MCF 10A (cell line): ENCODE measurements at regions of chr17 and their contacts with region 1.

Region 1: DNA sequence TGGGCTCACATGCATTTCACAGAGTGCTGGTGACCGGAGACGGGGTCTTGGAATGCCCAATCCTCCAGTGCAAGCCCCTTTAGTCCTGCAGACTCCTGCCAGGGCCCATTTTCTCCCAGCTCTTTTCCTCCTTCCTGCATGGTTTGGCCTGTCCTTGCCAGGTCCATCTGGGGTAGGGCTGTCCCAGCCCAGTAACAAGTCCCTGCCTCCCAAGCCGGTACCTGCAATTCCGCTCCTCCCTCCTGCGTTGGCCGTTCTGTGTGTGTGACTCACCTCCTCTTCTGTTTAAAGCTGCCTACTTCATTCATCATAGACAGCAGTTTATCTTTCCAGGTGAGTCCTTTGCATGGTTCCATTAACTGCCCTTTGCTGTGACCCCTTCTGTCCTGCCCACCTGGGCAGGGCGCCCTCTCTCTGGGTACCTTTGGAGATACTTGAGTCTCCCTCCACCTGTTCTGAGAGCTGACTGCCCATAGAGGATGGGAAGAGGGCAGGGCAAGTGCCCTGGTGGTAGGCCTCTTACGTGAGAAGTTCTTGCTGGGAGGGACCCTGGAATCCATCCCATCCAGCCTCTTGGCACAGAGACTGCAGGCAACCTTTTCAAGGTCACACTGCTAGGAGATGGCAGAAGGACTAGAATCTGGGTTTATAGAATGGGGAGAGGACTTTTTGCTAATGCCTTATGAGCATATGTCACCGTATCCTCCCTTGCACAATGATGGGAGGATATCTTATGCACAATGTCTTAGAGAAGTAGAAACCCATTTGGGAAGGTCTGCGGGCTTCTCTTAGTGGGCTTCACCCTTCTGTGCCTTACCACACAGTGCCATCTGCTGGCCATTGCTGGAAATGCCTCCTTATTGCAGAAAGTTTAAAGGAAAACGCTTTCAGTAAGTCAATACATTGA is 29.7 kb upstream of the LGALS9 start:
- DNase-seq: peak; percentile 79
- H3K4me3 Mint-ChIP-seq: no peak overlapping the region
- H3K27ac Mint-ChIP-seq: no peak overlapping the region
- H3K4me1 Mint-ChIP-seq: peaks cover 21% of the 10 kb centered on the region
- H3K27me3 Mint-ChIP-seq: no peaks in the 10 kb centered on the region
- CTCF ChIP-seq: peak; percentile 93

Region 2: DNA sequence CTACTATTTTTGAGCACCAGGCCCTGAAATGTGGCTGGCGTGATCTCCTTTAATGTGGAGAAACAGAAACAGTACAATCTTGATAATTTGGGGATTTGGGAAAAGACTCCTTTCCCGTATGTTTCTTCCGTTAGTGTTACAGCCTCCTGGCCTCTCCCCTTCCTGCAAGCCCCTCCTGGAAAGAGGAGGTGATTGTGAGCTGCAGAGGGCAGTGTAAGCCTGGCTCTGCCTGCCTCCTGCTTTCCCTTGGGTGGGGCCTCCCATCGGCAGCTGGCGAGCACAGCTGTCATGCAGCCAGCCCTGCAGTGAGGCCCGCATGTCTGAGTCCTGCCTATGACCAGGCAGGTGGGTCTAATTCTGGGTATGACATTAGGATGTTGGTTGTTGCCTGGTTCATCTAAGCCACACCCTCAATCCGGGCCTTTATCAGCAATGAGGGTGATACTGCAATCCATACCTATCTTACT is 356.1 kb before region 1 on chr17:
- CTCF ChIA-PET with region 1: interaction called, 229 read pairs
- POLR2A ChIA-PET with region 1: no interaction called
- intact Hi-C with region 1: loop called (anchors 1 kb)
- DNase-seq: peak; percentile 89
- H3K4me3 Mint-ChIP-seq: peak overlapping the region; percentile 49
- H3K27ac Mint-ChIP-seq: peak overlapping the region; percentile 74
- H3K4me1 Mint-ChIP-seq: peaks cover 48% of the 10 kb centered on the region
- H3K27me3 Mint-ChIP-seq: peaks cover 4% of the 10 kb centered on the region
- CTCF ChIP-seq: peak; percentile 68

Region 3: DNA sequence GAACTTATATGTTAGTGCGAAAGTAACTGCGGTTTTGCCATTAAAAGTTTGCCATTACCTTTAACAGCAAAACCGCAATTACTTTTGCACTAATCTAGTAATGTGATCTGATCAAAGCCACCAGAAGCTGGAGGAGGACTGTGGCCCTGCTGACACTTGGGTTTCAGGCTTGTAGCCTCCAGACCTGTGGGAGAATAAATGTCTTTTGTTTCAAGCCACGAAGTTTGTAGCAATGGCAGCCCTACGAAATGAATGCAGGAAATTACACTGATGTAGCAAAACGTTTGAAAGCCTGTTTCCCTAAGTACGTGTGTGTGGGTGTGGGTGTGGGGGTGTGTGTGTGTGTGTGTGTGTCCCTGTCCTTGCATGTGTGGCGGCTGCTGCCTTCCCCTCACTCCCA is 240.8 kb before region 1 on chr17:
- CTCF ChIA-PET with region 1: interaction called, 102 read pairs
- POLR2A ChIA-PET with region 1: interaction called, 3 read pairs
- intact Hi-C with region 1: no loop called
- DNase-seq: no peak
- H3K4me3 Mint-ChIP-seq: no peak overlapping the region
- H3K27ac Mint-ChIP-seq: no peak overlapping the region
- H3K4me1 Mint-ChIP-seq: no peaks in the 10 kb centered on the region
- H3K27me3 Mint-ChIP-seq: no peaks in the 10 kb centered on the region
- CTCF ChIP-seq: no peak

Region 4: GRCh38 chr17:27430882-27431491 is 170.3 kb before region 1 on chr17:
- CTCF ChIA-PET with region 1: interaction called, 29 read pairs
- POLR2A ChIA-PET with region 1: no interaction called
- intact Hi-C with region 1: loop called (anchors 1 kb)
- DNase-seq: peak; percentile 66
- H3K4me3 Mint-ChIP-seq: no peak overlapping the region
- H3K27ac Mint-ChIP-seq: no peak overlapping the region
- H3K4me1 Mint-ChIP-seq: no peaks in the 10 kb centered on the region
- H3K27me3 Mint-ChIP-seq: no peaks in the 10 kb centered on the region
- CTCF ChIP-seq: peak; percentile 60

Region 5: GRCh38 chr17:27578718-27579085 is 22.6 kb before region 1 on chr17:
- CTCF ChIA-PET with region 1: interaction called, 19 read pairs
- POLR2A ChIA-PET with region 1: no interaction called
- intact Hi-C with region 1: no loop called
- DNase-seq: peak; percentile 69
- H3K4me3 Mint-ChIP-seq: no peak overlapping the region
- H3K27ac Mint-ChIP-seq: no peak overlapping the region
- H3K4me1 Mint-ChIP-seq: peaks cover 41% of the 10 kb centered on the region
- H3K27me3 Mint-ChIP-seq: no peaks in the 10 kb centered on the region
- CTCF ChIP-seq: no peak

Region 6: DNA sequence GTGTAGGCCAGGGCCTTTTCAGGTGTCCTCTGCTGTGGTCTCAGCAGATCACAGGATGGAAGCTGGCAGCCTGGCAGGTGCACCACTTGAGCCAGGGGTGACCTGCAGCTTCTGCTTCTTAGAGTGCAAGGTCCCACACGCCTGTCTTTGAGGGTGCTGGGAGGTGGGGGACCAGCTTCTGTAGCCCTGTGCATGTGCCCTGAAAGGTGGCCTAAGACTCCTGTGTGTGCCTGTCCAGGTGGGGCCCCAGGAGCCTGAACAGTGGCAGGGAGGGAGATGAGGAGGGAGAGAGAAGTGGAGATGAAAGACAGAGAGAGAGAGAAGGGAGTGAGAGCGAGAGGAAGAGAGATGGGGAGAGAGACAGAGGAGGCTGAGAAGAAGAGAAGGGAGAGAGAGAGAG is 75.9 kb after region 1 on chr17:
- CTCF ChIA-PET with region 1: no interaction called
- POLR2A ChIA-PET with region 1: no interaction called
- intact Hi-C with region 1: no loop called
- DNase-seq: no peak
- H3K4me3 Mint-ChIP-seq: no peak overlapping the region
- H3K27ac Mint-ChIP-seq: no peak overlapping the region
- H3K4me1 Mint-ChIP-seq: no peaks in the 10 kb centered on the region
- H3K27me3 Mint-ChIP-seq: peaks cover 62% of the 10 kb centered on the region
- CTCF ChIP-seq: no peak

Region 7: DNA sequence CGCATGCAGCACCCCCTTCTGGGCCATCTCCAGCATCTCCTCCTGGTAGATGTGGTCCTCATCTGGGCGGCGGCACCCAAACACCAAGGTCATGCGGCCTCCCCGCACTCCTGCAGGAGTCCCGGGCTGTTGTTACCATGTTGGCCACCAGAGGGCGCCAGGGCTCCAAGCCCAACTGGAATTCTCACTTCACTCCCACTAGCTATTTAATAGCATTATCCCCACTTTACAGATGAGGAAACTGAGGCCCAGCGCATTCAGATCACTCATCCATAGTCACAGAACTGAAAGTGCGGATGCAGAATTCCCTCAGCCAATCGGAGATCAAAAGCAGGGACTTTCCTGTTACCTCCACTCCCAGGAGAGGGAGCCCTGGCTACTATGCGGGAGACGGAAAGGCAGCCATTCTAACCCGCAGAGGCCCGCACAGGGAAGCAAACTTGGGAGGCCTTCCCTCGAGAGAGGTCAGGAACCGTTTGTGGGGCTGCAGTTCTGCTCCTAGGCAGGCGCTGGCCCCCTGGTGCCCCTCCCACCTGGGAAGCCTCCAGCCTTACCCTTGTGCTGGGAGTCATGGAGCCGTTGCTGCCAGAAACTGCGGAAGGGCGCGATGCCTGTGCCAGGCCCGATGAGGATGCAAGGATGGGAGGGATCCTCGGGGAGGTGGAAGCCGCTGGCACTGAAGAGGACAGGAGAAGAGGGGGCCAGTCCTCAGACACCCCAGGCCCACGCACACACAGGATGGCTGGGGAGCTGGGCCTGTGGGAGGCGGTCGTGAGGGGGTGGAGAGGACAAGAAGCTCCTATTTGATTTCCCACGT is 159.0 kb after region 1 on chr17:
- CTCF ChIA-PET with region 1: interaction called, 40 read pairs
- POLR2A ChIA-PET with region 1: no interaction called
- intact Hi-C with region 1: loop called (anchors 1 kb)
- DNase-seq: peak; percentile 51
- H3K4me3 Mint-ChIP-seq: no peak overlapping the region
- H3K27ac Mint-ChIP-seq: no peak overlapping the region
- H3K4me1 Mint-ChIP-seq: no peaks in the 10 kb centered on the region
- H3K27me3 Mint-ChIP-seq: peaks cover 11% of the 10 kb centered on the region
- CTCF ChIP-seq: peak; percentile 96